Left cardiac atrium (tissue), 4 donors: ENCODE measurements at regions of chr3 and their contacts with region 1.

Region 1: GRCh38 chr3:58630076-58630709 is 36.4 kb downstream of the FAM3D start:
- DNase-seq: peak; percentile 61
- ATAC-seq: peak; percentile 55 to 69

Region 2: GRCh38 chr3:58568572-58569286 is 61.5 kb before region 1 on chr3:
- intact Hi-C with region 1: loop called (anchors 1 to 2 kb)
- DNase-seq: peak; percentile 75
- ATAC-seq: peak; percentile 46 to 58